Activated naive CD4-positive, alpha-beta T cell treated with anti-CD3 and anti-CD28 coated beads, Interleukin-2, amount 10 ng/mL, durations not matched to agents 7 days and 5 days (primary cell): ENCODE measurements at regions of chr22 and their contacts with region 1.

Region 1: DNA sequence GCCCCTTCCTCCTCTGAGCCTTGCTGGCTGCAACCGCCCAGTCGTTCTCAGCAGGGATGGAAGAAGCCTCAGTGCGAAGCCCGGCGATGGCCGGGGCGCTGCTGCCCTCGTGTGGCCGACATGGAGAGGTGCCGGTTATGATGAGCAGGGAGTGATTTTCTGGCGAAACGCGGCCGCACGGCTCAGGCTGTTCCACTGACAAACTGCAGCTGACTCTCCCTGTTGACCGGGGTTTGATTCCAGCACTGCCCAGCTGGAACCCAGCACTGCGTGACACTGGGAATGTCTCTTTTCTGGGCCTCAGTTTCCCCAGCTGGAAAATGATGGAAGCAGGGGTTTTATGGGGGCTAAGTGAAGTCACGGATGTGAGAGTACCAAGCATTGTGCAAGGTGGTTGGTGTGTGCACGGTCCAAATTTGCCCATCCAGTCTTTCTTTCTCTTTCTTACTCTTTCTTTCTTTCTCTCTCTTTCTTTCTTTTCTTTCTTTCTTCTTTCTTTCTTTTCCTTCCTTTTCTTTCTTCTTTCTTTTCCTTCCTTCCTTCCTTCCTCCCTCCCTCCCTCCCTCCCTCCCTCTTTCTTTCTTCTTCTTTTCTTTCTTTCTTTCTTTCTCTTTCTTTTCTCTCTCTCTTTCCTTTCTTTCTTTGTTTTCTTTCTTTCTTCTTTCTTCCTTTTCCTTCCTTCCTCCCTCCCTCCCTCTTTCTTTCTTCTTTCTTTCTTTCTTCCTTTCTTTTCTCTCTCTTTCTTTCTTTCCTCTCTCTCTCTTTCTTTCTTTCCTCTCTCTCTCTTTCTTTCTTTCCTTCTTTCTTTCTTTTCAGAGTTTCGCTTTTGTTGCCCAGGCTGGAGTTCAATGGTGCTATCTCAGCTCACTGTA is 25.8 kb upstream of the MPPED1 start:
- DNase-seq: peak; percentile 78
- H3K4me3 Mint-ChIP-seq: no peak overlapping the region
- H3K27ac Mint-ChIP-seq: no peak overlapping the region
- H3K4me1 Mint-ChIP-seq: peaks cover 12% of the 10 kb centered on the region
- H3K27me3 Mint-ChIP-seq: peaks cover 61% of the 10 kb centered on the region

Region 2: DNA sequence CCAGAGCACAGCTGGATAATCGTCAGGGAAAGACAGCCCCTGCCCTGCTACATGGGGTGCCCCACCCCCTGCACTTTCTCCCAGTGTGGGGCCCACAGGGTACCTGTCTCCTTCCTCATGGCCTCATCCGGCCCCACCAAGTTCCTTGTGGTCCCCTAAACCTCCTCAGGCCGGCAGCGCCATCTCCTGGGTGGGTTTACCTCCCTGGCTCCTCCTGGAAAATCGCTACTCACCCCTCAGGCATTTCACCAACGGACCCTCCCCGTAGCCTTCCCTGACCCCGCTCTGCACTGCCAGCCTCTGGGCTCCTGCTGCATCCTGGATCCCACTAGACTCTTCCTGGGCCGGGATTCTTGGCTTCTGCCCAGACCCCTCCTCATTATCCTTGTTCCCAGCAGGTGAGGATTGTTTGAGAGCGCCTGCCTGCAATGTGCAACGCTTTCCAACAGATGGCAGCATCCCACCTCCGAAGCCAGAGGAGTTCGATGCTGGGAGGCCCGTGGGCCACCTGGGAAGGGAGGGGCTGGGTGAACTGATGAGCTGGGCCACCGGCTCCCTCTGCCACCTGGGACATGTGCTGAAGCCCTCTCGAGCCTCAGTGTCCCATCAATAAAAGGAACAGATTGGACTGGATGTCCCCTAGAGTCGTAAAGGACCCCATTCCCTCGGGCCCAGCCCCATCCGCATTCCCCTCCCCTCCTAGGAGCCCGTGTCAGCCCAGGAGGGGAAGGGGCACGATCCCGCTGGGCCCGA is 154.9 kb before region 1 on chr22:
- CTCF ChIA-PET with region 1: interaction called, 28 read pairs
- DNase-seq: peak; percentile 80
- H3K4me3 Mint-ChIP-seq: no peak overlapping the region
- H3K27ac Mint-ChIP-seq: no peak overlapping the region
- H3K4me1 Mint-ChIP-seq: peaks cover 5% of the 10 kb centered on the region
- H3K27me3 Mint-ChIP-seq: peaks cover 23% of the 10 kb centered on the region

Region 3: DNA sequence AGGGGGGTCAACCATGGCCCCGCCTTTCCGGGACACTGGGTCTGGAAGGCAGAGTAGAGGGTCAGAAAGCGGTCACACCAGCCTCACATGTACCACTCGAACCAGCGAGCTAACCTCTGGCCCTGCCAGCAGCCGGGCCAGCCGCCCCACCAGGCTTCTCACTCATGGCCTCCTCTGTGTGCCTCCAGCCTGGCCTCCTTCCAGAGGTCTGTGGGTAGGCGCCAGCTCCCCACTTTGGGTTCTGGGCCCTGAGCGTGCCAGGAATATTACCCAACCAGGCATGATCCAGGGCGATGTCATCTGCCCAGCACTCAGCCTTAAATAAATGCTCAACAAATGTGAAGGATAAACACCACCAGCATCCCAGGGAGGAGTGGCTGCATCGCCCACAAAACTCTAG is 48.6 kb before region 1 on chr22:
- CTCF ChIA-PET with region 1: no interaction called
- DNase-seq: no peak
- H3K4me3 Mint-ChIP-seq: no peak overlapping the region
- H3K27ac Mint-ChIP-seq: no peak overlapping the region
- H3K4me1 Mint-ChIP-seq: peaks cover 6% of the 10 kb centered on the region
- H3K27me3 Mint-ChIP-seq: peaks cover 49% of the 10 kb centered on the region

Region 4: DNA sequence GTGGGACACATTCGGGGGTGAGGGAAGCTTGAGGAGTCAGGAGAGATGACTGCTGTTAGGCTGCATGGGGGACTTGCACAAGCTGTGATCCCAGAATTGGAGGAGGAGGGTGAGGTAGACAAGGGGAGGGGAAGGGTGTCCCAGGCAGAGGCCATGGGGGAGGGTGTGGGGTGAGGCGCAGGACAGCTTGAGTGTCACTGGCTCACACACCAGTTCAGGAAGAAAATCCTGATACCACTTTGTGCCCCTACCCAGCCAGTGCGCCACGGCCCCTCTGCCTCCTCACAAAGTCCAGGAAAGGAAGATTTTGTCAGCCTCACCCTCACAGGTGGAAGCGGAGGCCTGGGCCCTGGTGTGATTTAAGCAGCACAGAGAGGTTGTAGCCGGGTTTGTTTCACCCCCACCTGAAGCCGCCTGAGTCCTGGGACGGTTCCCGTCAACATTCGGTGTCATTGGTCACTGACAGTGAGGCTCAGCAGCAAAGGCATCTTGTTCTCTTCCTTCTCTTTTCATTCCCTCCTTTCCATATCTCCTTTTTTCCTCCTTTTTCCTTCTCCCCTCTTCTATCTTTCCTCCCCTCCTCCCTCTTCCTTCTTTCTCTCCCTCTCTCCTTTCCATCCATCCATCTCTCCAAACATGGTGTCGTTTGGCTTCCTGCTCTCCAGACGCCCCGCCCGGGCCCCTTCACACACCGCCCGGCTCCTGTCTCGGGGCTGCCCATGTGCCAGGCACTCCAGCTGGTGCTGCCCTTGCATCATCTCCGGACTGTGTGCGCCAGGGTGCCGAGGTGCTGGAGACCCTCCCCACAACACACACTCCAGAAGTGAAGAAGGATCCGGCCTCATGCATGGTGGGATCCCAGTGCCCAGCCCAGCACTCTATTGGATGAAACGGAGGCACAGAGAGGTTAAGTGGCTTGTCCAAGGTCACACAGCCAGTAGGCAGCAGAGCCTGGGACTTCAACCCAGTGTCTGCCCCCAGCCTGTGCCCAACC is 115.1 kb after region 1 on chr22:
- CTCF ChIA-PET with region 1: no interaction called
- DNase-seq: no peak
- H3K4me3 Mint-ChIP-seq: no peak overlapping the region
- H3K27ac Mint-ChIP-seq: no peak overlapping the region
- H3K4me1 Mint-ChIP-seq: no peaks in the 10 kb centered on the region
- H3K27me3 Mint-ChIP-seq: no peaks in the 10 kb centered on the region